ENCODE measurements at regions of chr1 and their contacts with region 1.

Region 1: GRCh38 chr1:113904674-113905434 is at the starts of genes AP4B1 and DCLRE1B:
- DNase-seq: peak; percentile 99 to 100
- H3K4me3 ChIP-seq: peak within 1 kb of the TSS; percentile 61 to 87
- H3K27ac ChIP-seq: peak within 1 kb of the TSS; percentile 80 to 83
- H3K4me1 ChIP-seq: peaks cover 0 to 28% (median 10%) of the 10 kb centered on the region in 4 donors
- H3K27me3 ChIP-seq: no peaks in the 10 kb centered on the region
- CTCF ChIP-seq: peak; percentile 62 to 80

Region 2: GRCh38 chr1:113759333-113760101 is 145.3 kb before region 1 on chr1 and contains the start of gene PHTF1:
- intact Hi-C with region 1: loop called (anchors 10 kb)
- DNase-seq: peak; percentile 64 to 83
- H3K4me3 ChIP-seq: peak within 1 kb of the TSS; percentile 77 to 95
- H3K27ac ChIP-seq: peak within 1 kb of the TSS; percentile 91 to 98
- H3K4me1 ChIP-seq: peaks cover 0 to 20% (median 2%) of the 10 kb centered on the region in 4 donors
- H3K27me3 ChIP-seq: no peaks in the 10 kb centered on the region
- CTCF ChIP-seq: no peak

Region 3: DNA sequence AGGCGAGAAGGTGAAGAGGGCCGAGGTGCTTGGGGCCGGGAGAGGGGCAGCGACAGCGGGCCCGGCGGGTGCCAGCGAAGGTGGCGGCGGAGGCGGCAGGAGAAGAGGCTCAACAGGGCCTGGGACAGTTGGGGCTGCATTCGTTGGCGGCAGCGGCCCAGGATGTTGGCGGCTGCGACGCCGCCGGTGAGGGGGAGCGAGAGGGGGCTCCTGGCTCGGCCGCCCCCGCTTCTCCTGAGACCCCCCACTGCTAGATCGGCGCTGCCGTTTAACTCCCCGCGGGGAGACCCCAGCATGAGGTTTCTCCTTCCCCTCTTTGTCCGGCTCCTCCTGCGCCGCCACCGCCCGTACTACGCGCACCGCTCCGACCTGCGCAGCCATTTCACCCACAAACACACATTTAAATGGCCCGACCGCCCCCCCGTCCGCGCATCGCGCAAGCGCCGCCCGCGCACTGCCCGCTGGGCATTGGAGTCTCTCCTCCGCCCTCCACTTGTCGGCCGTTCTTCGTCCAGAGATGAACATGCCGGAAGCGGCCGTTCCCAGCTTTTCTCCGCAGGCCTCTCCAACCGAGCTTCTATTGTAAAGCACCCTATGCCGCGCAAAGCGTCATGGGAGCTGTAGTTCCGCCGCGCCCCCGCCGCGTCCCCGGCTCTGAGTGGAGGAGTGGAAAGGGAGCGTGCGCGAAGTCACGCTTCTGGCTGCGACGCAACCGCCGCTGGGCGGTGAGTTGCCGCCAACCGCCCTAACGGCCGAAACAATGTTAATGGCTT is 92.8 kb before region 1 on chr1 and contains the start of gene RSBN1:
- intact Hi-C with region 1: loop called (anchors 10 kb)
- DNase-seq: peak; percentile 99 to 100
- H3K4me3 ChIP-seq: peak within 1 kb of the TSS; percentile 76 to 87
- H3K27ac ChIP-seq: peak within 1 kb of the TSS; percentile 95 to 97
- H3K4me1 ChIP-seq: peaks cover 0 to 40% (median 12%) of the 10 kb centered on the region in 4 donors
- H3K27me3 ChIP-seq: no peaks in the 10 kb centered on the region
- CTCF ChIP-seq: peak in 1 of 2 experiments; percentile 37

Region 4: GRCh38 chr1:113928941-113929749 is 24.3 kb after region 1 on chr1 and contains the start of gene HIPK1:
- intact Hi-C with region 1: loop called (anchors 1 kb)
- DNase-seq: peak; percentile 93 to 96
- H3K4me3 ChIP-seq: peak within 1 kb of the TSS; percentile 79 to 97
- H3K27ac ChIP-seq: peak within 1 kb of the TSS; percentile 98
- H3K4me1 ChIP-seq: peaks cover 0 to 50% (median 27%) of the 10 kb centered on the region in 4 donors
- H3K27me3 ChIP-seq: no peaks in the 10 kb centered on the region
- CTCF ChIP-seq: peak in 1 of 2 experiments; percentile 51